ENCODE measurements at regions of chr3 and their contacts with region 1.

Region 1: GRCh38 chr3:126270145-126270811 is 86.9 kb downstream of the KLF15 start:
- DNase-seq: no peak
- H3K27ac ChIP-seq: peak overlapping the region; percentile 82
- CTCF ChIP-seq: no peak

Region 2: GRCh38 chr3:126287536-126288241 is 17.4 kb after region 1 on chr3:
- CTCF ChIA-PET with region 1: interaction called, 11 read pairs
- POLR2A ChIA-PET with region 1: no interaction called
- DNase-seq: no peak
- H3K27ac ChIP-seq: peak overlapping the region; percentile 72
- CTCF ChIP-seq: no peak

Region 3: GRCh38 chr3:126340081-126340511 is 69.8 kb after region 1 on chr3:
- CTCF ChIA-PET with region 1: no interaction called
- POLR2A ChIA-PET with region 1: no interaction called
- DNase-seq: no peak
- H3K27ac ChIP-seq: no peak overlapping the region
- CTCF ChIP-seq: no peak